Mammary epithelial cell (primary cell): ENCODE measurements at regions of chr16 and their contacts with region 1.

Region 1: GRCh38 chr16:75789237-75789636 is 62.9 kb upstream of the CPHXL start:
- DNase-seq: peak; percentile 39
- H3K4me3 ChIP-seq: no peak overlapping the region
- H3K27ac ChIP-seq: no peak overlapping the region
- H3K4me1 ChIP-seq: no peaks in the 10 kb centered on the region
- H3K27me3 ChIP-seq: no peaks in the 10 kb centered on the region
- CTCF ChIP-seq: peak; percentile 63 to 69

Region 2: DNA sequence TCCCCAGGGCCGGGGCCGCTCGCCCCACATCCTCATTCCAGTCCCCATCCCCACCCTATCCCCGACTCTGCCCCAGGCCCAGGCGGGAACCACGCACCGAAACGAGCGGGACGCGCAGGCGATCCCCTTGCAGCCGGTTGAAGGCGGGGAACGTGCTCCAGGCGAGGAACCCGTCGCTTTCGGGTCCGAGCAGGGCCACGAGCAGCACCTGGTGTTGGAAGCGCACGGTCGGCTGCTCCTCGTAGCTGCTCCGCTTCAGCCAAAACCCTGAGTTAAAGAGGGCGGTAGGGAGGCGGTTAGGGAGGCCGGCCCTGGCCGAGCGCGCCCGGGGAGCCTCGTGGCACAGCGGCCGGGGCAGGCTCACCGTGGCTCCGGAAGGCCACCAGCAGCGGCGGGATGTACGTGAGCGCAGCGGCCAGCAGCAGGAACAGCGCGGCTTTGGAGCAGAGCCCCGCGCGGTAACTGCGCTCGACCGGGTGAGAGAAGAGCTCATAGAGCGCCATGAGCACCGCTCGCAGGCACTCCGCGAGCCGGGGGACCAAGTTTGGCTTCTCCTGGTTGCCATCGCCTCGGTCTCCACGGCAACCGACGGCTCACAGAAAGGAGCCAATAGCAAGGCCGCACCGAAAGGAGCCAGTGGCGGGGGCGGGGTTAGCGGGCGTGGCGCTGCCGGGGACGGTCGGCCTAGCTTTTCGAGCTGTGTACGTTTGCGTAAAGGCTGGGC is 233.4 kb before region 1 on chr16 and contains the start of gene TMEM231:
- CTCF ChIA-PET with region 1: no interaction called
- dilution Hi-C with region 1: no loop called
- in situ Hi-C with region 1: no loop called
- intact Hi-C with region 1: no loop called
- DNase-seq: peak; percentile 92
- H3K4me3 ChIP-seq: peak within 1 kb of the TSS; percentile 73 to 88 (median 76)
- H3K27ac ChIP-seq: peak within 1 kb of the TSS; percentile 82
- H3K4me1 ChIP-seq: peaks cover 11% of the 10 kb centered on the region
- H3K27me3 ChIP-seq: no peaks in the 10 kb centered on the region
- CTCF ChIP-seq: no peak
- total RNA-seq, gene TMEM231: 13.8 to 21.2 TPM

Region 3: GRCh38 chr16:75764154-75764768 is 25.0 kb before region 1 on chr16:
- CTCF ChIA-PET with region 1: no interaction called
- dilution Hi-C with region 1: no loop called
- in situ Hi-C with region 1: no loop called
- intact Hi-C with region 1: no loop called
- DNase-seq: peak; percentile 53
- H3K4me3 ChIP-seq: no peak overlapping the region
- H3K27ac ChIP-seq: no peak overlapping the region
- H3K4me1 ChIP-seq: no peaks in the 10 kb centered on the region
- H3K27me3 ChIP-seq: no peaks in the 10 kb centered on the region
- CTCF ChIP-seq: peak; percentile 83 to 88

Region 4: DNA sequence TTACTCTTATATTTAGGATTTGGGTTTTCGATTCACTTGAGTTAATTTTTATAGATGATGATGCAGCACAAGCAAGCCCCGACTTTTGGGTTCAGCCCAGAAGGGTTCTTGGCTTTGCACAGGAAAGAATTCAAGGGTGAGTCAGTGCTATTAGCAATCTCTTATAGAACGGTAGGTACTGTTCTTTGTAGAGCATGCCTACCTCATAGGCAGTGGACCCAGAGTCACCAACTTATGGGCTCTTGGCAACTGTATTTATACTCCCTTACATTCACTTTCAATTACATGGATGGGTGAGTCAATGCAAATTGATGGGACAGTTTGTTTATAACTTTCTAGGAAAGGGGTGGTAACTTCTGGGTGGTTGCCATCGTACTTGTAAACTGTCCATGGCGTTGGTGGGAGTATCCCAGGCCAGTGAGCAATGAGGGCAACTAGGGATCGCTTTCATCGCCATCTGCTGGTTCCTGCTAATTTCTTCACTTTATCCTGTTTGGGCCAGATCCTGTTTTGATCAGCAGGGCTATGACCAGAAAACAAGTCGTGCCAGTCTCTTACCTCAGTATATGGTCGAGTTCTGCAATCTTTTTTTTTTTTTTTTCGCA is 850.5 kb after region 1 on chr16:
- CTCF ChIA-PET with region 1: no interaction called
- dilution Hi-C with region 1: no loop called
- in situ Hi-C with region 1: no loop called
- intact Hi-C with region 1: loop called (anchors 1 kb)
- DNase-seq: peak; percentile 47
- H3K4me3 ChIP-seq: no peak overlapping the region
- H3K27ac ChIP-seq: no peak overlapping the region
- H3K4me1 ChIP-seq: no peaks in the 10 kb centered on the region
- H3K27me3 ChIP-seq: no peaks in the 10 kb centered on the region
- CTCF ChIP-seq: peak; percentile 27 to 38

Region 5: DNA sequence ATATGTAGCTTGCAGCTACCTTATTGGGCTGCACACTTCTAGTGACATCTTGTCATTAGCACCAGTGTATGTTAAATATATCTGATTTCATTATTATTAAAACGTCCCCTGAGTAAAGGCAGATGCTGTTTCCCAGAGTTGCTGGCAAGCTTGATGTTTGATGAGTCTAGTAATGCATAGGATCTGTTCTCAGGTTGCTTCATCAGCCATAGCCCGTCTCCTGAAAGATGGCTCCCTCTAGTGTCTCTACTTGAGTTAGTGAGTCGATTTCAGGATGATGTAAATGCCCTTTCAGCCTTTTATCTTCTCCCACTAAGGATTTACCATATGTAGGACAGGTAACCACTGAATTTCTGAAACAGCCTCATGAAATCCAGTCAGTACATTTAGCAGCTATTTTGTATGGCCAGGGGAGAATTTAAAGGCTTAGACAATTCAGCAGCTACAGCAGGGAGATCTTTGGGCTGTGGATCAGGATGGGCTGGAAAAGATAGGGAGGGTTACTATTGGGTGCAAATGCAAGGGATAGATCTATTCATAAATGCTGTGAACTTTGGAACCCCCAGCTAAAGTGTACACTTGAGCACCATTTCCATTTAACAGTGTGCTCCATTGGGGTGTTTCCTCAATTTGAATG is 864.3 kb after region 1 on chr16:
- CTCF ChIA-PET with region 1: no interaction called
- dilution Hi-C with region 1: loop called (anchors 25 kb)
- in situ Hi-C with region 1: loop called (anchors 5 kb)
- intact Hi-C with region 1: loop called (anchors 1 kb)
- DNase-seq: peak; percentile 53
- H3K4me3 ChIP-seq: no peak overlapping the region
- H3K27ac ChIP-seq: no peak overlapping the region
- H3K4me1 ChIP-seq: no peaks in the 10 kb centered on the region
- H3K27me3 ChIP-seq: no peaks in the 10 kb centered on the region
- CTCF ChIP-seq: peak; percentile 70 to 83